CD8-positive, alpha-beta T cell (primary cell): ENCODE measurements at regions of chr12 and their contacts with region 1.

Region 1: GRCh38 chr12:7018350-7019042 is at the start of gene LPCAT3:
- DNase-seq: peak; percentile 94 to 99 (median 97)
- ATAC-seq: peak; percentile 97
- H3K4me3 ChIP-seq: peak within 1 kb of the TSS; percentile 82 to 99
- H3K4me3 Mint-ChIP-seq: peak within 1 kb of the TSS; percentile 90
- H3K27ac ChIP-seq: peak within 1 kb of the TSS; percentile 79 to 92
- H3K27ac Mint-ChIP-seq: peak within 1 kb of the TSS; percentile 88
- H3K4me1 ChIP-seq: peaks cover 13% of the 10 kb centered on the region
- H3K4me1 Mint-ChIP-seq: peaks cover 37% of the 10 kb centered on the region
- H3K27me3 ChIP-seq: no peaks in the 10 kb centered on the region
- H3K27me3 Mint-ChIP-seq: no peaks in the 10 kb centered on the region
- CTCF ChIP-seq: peak; percentile 85
- total RNA-seq, gene LPCAT3: 24.4 to 27.1 TPM

Region 2: DNA sequence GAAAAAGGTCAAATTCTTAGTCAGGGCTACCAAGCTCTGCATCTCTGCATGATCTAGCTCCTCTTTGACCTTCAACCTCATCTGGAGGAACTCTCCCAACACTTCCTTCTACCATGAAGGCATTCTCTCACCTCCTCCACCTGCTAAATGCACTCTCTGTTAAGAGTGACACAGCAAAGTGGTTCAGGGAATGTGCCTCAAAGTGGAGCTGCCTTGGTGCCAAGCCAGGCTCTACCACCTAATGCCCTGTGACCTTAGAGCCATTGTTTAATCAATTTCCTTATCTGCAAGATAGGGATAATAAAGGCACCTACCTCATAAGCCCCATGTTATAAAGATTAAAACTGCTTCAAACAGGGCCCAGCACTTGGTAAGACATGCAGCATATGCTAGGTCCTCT is 1310.1 kb before region 1 on chr12:
- CTCF ChIA-PET with region 1: no interaction called
- POLR2A ChIA-PET with region 1: no interaction called
- intact Hi-C with region 1: no loop called
- DNase-seq: no peak
- ATAC-seq: no peak
- H3K4me3 ChIP-seq: no peak overlapping the region
- H3K4me3 Mint-ChIP-seq: no peak overlapping the region
- H3K27ac ChIP-seq: no peak overlapping the region
- H3K27ac Mint-ChIP-seq: no peak overlapping the region
- H3K4me1 ChIP-seq: no peaks in the 10 kb centered on the region
- H3K4me1 Mint-ChIP-seq: no peaks in the 10 kb centered on the region
- H3K27me3 ChIP-seq: no peaks in the 10 kb centered on the region
- H3K27me3 Mint-ChIP-seq: no peaks in the 10 kb centered on the region
- CTCF ChIP-seq: no peak

Region 3: DNA sequence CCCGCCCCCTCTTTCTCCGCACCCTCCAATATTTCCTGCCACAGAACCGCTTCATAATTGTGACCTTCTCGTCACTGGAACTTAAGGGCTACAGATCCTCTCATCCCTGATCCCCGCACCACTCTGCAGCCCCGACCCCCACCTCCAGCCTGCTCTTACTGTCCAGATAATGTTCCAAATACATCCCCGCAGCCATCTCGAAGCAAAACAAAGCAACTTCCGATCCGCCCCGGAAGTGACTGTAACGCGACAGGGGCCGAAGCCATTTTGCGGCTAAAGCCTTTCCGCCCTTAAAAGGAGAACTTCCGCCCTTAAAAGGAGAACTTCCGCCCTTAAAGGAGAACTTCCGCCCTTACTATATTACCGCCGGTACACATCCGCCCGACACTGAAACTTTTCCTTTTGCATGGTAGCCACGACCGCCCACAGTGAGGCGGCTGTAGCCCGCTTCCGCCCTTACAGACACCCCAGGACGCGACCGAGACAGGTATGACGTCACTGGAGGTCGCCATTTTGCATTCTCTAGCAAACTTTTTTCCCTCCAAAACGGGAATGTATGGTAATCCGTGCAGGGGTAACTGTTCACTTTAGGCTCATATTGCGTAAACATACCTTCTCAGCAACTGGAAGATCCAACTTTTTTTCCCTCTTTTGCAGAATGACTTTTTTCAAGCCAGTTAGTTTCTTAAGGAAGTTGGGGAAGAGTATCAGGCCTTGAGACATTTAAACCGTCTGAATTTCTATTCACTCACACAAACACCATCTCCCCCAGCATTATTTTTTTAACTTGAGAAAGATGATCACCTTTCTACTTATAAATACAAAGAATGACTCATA is 355.4 kb before region 1 on chr12 and contains the start of gene ING4:
- CTCF ChIA-PET with region 1: no interaction called
- POLR2A ChIA-PET with region 1: no interaction called
- intact Hi-C with region 1: loop called in 1 of 2 experiments (anchors 2 kb)
- DNase-seq: peak; percentile 91 to 100 (median 95)
- ATAC-seq: peak; percentile 97
- H3K4me3 ChIP-seq: peak within 1 kb of the TSS; percentile 81 to 92
- H3K4me3 Mint-ChIP-seq: peak within 1 kb of the TSS; percentile 96
- H3K27ac ChIP-seq: peak within 1 kb of the TSS; percentile 87 to 91
- H3K27ac Mint-ChIP-seq: peak within 1 kb of the TSS; percentile 97
- H3K4me1 ChIP-seq: peaks cover 20% of the 10 kb centered on the region
- H3K4me1 Mint-ChIP-seq: peaks cover 38% of the 10 kb centered on the region
- H3K27me3 ChIP-seq: no peaks in the 10 kb centered on the region
- H3K27me3 Mint-ChIP-seq: no peaks in the 10 kb centered on the region
- CTCF ChIP-seq: no peak
- total RNA-seq, gene ING4: 14.1 to 15.9 TPM

Region 4: GRCh38 chr12:6792522-6793201 is 225.8 kb before region 1 on chr12:
- CTCF ChIA-PET with region 1: no interaction called
- POLR2A ChIA-PET with region 1: no interaction called
- intact Hi-C with region 1: no loop called
- DNase-seq: peak in 8 of 9 experiments; percentile 18 to 70 (median 43)
- ATAC-seq: peak; percentile 93
- H3K4me3 ChIP-seq: peak overlapping the region in 1 of 2 experiments; percentile 25
- H3K4me3 Mint-ChIP-seq: peak overlapping the region; percentile 42
- H3K27ac ChIP-seq: no peak overlapping the region
- H3K27ac Mint-ChIP-seq: peak overlapping the region; percentile 22
- H3K4me1 ChIP-seq: peaks cover 27% of the 10 kb centered on the region
- H3K4me1 Mint-ChIP-seq: peaks cover 33% of the 10 kb centered on the region
- H3K27me3 ChIP-seq: no peaks in the 10 kb centered on the region
- H3K27me3 Mint-ChIP-seq: peaks cover 4% of the 10 kb centered on the region
- CTCF ChIP-seq: no peak

Region 5: GRCh38 chr12:6890789-6891645 is 127.5 kb before region 1 on chr12:
- CTCF ChIA-PET with region 1: no interaction called
- POLR2A ChIA-PET with region 1: no interaction called
- intact Hi-C with region 1: loop called (anchors 1 kb)
- DNase-seq: peak; percentile 97 to 100 (median 99)
- ATAC-seq: peak; percentile 94
- H3K4me3 ChIP-seq: peak overlapping the region; percentile 64 to 70
- H3K4me3 Mint-ChIP-seq: peak overlapping the region; percentile 80
- H3K27ac ChIP-seq: peak overlapping the region; percentile 64 to 97
- H3K27ac Mint-ChIP-seq: peak overlapping the region; percentile 90
- H3K4me1 ChIP-seq: peaks cover 11% of the 10 kb centered on the region
- H3K4me1 Mint-ChIP-seq: peaks cover 16% of the 10 kb centered on the region
- H3K27me3 ChIP-seq: no peaks in the 10 kb centered on the region
- H3K27me3 Mint-ChIP-seq: no peaks in the 10 kb centered on the region
- CTCF ChIP-seq: peak; percentile 86

Region 6: DNA sequence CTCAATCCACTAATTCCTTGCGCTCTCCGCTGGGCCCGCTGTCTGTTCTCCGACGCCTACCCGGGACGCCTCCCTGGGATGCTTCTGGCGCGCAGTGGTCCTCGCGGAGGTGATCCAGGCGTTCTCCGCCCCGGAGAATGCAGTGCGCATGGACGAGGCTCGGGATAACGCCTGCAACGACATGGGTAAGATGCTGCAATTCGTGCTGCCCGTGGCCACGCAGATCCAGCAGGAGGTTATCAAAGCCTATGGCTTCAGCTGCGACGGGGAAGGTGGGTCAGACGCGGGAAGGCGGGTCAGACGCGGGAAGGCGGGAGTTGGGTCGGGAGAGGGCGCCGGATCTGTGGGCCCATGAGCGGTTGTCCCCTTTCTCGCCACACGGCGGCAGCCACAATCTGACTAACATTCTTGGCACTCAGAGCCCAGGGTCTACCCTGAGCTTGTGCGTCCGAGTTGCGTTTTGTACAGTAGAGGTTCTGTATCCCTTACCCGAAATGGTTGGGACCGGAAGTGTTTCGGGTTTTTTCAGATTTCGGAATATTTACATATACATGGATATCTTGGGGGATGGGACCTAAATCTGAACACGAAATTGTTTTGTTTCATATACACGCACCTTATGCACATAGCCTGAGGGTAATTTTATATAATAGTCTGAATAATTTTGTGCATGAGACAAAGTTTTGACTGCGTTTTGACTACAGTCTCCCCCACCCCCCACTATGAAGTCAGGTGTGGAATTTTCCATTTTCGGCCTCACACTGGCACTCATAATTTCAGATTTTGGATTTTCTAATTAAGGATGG is 73.9 kb before region 1 on chr12:
- CTCF ChIA-PET with region 1: interaction called, 7 read pairs
- POLR2A ChIA-PET with region 1: interaction called, 16 read pairs
- intact Hi-C with region 1: loop called (anchors 1 to 2 kb)
- DNase-seq: peak; percentile 67 to 94 (median 89)
- ATAC-seq: peak; percentile 51
- H3K4me3 ChIP-seq: peak overlapping the region; percentile 90 to 97
- H3K4me3 Mint-ChIP-seq: peak overlapping the region; percentile 99
- H3K27ac ChIP-seq: peak overlapping the region; percentile 94 to 97
- H3K27ac Mint-ChIP-seq: peak overlapping the region; percentile 100
- H3K4me1 ChIP-seq: peaks cover 56% of the 10 kb centered on the region
- H3K4me1 Mint-ChIP-seq: peaks cover 63% of the 10 kb centered on the region
- H3K27me3 ChIP-seq: no peaks in the 10 kb centered on the region
- H3K27me3 Mint-ChIP-seq: no peaks in the 10 kb centered on the region
- CTCF ChIP-seq: peak; percentile 87

Region 7: GRCh38 chr12:7129872-7130680 is 111.6 kb after region 1 on chr12 and contains the start of gene CLSTN3:
- CTCF ChIA-PET with region 1: no interaction called
- POLR2A ChIA-PET with region 1: no interaction called
- intact Hi-C with region 1: loop called in 1 of 2 experiments (anchors 1 kb)
- DNase-seq: peak; percentile 66 to 93 (median 87)
- ATAC-seq: peak; percentile 88
- H3K4me3 ChIP-seq: peak within 1 kb of the TSS; percentile 97 to 99
- H3K4me3 Mint-ChIP-seq: peak within 1 kb of the TSS; percentile 91
- H3K27ac ChIP-seq: peak within 1 kb of the TSS; percentile 73 to 88
- H3K27ac Mint-ChIP-seq: peak within 1 kb of the TSS; percentile 87
- H3K4me1 ChIP-seq: peaks cover 22% of the 10 kb centered on the region
- H3K4me1 Mint-ChIP-seq: peaks cover 32% of the 10 kb centered on the region
- H3K27me3 ChIP-seq: no peaks in the 10 kb centered on the region
- H3K27me3 Mint-ChIP-seq: no peaks in the 10 kb centered on the region
- CTCF ChIP-seq: no peak
- total RNA-seq, gene CLSTN3: 23.1 to 24.0 TPM

Region 8: DNA sequence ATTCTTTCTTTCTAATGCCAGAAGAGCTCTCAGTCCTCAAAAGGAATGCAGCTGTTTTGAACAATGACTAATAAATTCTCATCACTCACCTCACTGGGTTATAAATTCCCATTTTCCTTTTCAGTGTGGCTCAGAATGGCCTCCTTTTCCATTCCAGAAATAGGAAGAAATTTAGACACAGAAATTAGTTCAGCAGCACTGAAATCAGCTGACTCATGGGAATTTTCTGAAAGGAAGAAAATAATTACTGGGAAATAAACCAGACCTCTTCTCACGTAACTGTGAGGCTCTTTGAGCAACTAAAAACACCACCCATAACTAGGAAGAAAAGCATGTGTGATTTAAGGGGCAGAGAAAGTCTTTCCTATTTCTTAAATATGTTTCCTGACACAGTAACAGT is 461.3 kb after region 1 on chr12:
- CTCF ChIA-PET with region 1: no interaction called
- POLR2A ChIA-PET with region 1: no interaction called
- intact Hi-C with region 1: no loop called
- DNase-seq: no peak
- ATAC-seq: no peak
- H3K4me3 ChIP-seq: no peak overlapping the region
- H3K4me3 Mint-ChIP-seq: no peak overlapping the region
- H3K27ac ChIP-seq: no peak overlapping the region
- H3K27ac Mint-ChIP-seq: no peak overlapping the region
- H3K4me1 ChIP-seq: no peaks in the 10 kb centered on the region
- H3K4me1 Mint-ChIP-seq: no peaks in the 10 kb centered on the region
- H3K27me3 ChIP-seq: no peaks in the 10 kb centered on the region
- H3K27me3 Mint-ChIP-seq: peaks cover 6% of the 10 kb centered on the region
- CTCF ChIP-seq: no peak